ENCODE measurements at regions of chr17 and their contacts with region 1.

Region 1: DNA sequence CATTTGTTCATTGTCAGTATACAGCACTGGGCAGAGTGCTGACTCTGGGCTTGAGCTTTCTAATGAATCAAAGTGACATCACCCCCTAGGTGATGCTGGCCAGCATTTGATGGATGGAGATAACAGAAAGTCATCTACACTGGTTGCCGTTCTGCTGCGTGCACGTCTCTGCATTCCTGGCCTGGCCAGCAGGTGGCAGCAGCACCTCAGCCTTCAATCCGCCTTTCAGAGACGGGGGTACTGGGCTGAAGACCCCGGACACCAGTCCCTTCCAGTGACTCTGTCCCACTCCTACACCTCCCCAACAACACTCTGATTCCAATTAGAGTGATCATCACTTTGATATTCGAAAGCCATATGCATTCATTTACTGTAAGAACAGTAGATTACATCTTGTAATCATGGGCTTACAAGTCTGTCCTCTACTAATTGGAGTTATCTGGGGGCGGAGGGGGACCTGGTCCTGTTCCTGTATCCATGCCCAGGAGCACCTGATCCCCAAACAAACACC is 6.0 kb downstream of the CPSF4L start:
- DNase-seq: peak in 1 of 2 experiments; percentile 67
- H3K4me3 ChIP-seq: no peak overlapping the region
- H3K4me3 Mint-ChIP-seq: no peak overlapping the region
- H3K27ac Mint-ChIP-seq: no peak overlapping the region
- H3K4me1 ChIP-seq: no peaks in the 10 kb centered on the region
- H3K4me1 Mint-ChIP-seq: no peaks in the 10 kb centered on the region
- H3K27me3 ChIP-seq: no peaks in the 10 kb centered on the region
- H3K27me3 Mint-ChIP-seq: no peaks in the 10 kb centered on the region
- CTCF ChIP-seq: peak; percentile 95 to 98

Region 2: GRCh38 chr17:73291260-73291801 is 35.6 kb after region 1 on chr17:
- CTCF ChIA-PET with region 1: no interaction called
- POLR2A ChIA-PET with region 1: no interaction called
- intact Hi-C with region 1: no loop called
- DNase-seq: no peak
- H3K4me3 ChIP-seq: no peak overlapping the region
- H3K4me3 Mint-ChIP-seq: no peak overlapping the region
- H3K27ac Mint-ChIP-seq: peak overlapping the region; percentile 79
- H3K4me1 ChIP-seq: peaks cover 41% of the 10 kb centered on the region
- H3K4me1 Mint-ChIP-seq: peaks cover 55% of the 10 kb centered on the region
- H3K27me3 ChIP-seq: no peaks in the 10 kb centered on the region
- H3K27me3 Mint-ChIP-seq: no peaks in the 10 kb centered on the region
- CTCF ChIP-seq: no peak

Region 3: GRCh38 chr17:73371285-73371684 is 115.6 kb after region 1 on chr17:
- CTCF ChIA-PET with region 1: interaction called, 37 read pairs
- POLR2A ChIA-PET with region 1: no interaction called
- intact Hi-C with region 1: loop called (anchors 1 kb)
- DNase-seq: no peak
- H3K4me3 ChIP-seq: no peak overlapping the region
- H3K4me3 Mint-ChIP-seq: no peak overlapping the region
- H3K27ac Mint-ChIP-seq: no peak overlapping the region
- H3K4me1 ChIP-seq: no peaks in the 10 kb centered on the region
- H3K4me1 Mint-ChIP-seq: no peaks in the 10 kb centered on the region
- H3K27me3 ChIP-seq: no peaks in the 10 kb centered on the region; the same call in none of the 2 replicates
- H3K27me3 Mint-ChIP-seq: peaks cover 22% of the 10 kb centered on the region
- CTCF ChIP-seq: no peak

Measured in Caco-2 (cell line).